MCF 10A (cell line): ENCODE measurements at regions of chr14 and their contacts with region 1.

Region 1: GRCh38 chr14:74493343-74494261 is at the start of gene ISCA2:
- DNase-seq: peak; percentile 99
- H3K4me3 Mint-ChIP-seq: no peak within 1 kb of the TSS
- H3K27ac Mint-ChIP-seq: no peak within 1 kb of the TSS
- H3K4me1 Mint-ChIP-seq: peaks cover 26% of the 10 kb centered on the region
- H3K27me3 Mint-ChIP-seq: no peaks in the 10 kb centered on the region
- CTCF ChIP-seq: no peak
- total RNA-seq, gene ISCA2: 13.9 and 21.1 TPM in 2 replicates

Region 2: GRCh38 chr14:74302634-74303577 is 190.7 kb before region 1 on chr14 and contains the start of gene ABCD4:
- CTCF ChIA-PET with region 1: no interaction called
- POLR2A ChIA-PET with region 1: interaction called, 12 read pairs
- intact Hi-C with region 1: no loop called
- DNase-seq: peak; percentile 93
- H3K4me3 Mint-ChIP-seq: peak within 1 kb of the TSS; percentile 99
- H3K27ac Mint-ChIP-seq: peak within 1 kb of the TSS; percentile 81
- H3K4me1 Mint-ChIP-seq: peaks cover 11% of the 10 kb centered on the region
- H3K27me3 Mint-ChIP-seq: no peaks in the 10 kb centered on the region
- CTCF ChIP-seq: peak; percentile 43
- total RNA-seq, gene ABCD4: 26.6 and 30.8 TPM in 2 replicates

Region 3: GRCh38 chr14:74362361-74362915 is 131.2 kb before region 1 on chr14:
- CTCF ChIA-PET with region 1: interaction called, 9 read pairs
- POLR2A ChIA-PET with region 1: interaction called, 3 read pairs
- intact Hi-C with region 1: loop called (anchors 1 kb)
- DNase-seq: peak; percentile 84
- H3K4me3 Mint-ChIP-seq: no peak overlapping the region
- H3K27ac Mint-ChIP-seq: no peak overlapping the region
- H3K4me1 Mint-ChIP-seq: no peaks in the 10 kb centered on the region
- H3K27me3 Mint-ChIP-seq: peaks cover 23% of the 10 kb centered on the region
- CTCF ChIP-seq: peak; percentile 82

Region 4: DNA sequence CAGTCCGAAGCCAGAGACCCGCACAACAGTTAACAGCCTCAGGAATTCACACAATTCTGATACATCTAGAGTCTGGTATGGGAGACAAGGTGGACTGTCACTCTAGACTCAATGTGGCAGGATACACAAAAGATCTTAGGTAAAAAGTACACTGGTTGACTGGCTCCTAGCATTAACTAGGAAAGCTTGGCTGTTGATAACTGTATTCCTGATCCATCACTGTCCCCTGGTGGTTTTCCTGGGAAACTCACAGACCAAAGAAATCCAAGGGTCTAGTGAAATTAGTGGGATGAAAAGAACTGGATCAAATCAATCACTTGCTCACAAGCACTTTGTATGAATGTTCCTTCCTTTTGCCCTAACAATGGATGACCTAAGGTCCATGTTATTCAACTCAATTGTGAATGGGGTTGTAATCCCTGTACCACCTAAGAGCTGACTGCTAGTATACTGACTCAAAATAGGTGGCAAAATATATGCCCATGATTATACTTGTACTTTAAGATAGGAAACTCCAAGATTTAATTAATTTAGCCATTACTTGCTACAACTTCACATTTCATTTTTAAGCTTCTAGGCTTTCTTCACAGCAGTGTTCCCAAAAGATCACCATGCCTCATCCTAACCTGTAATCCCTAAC is 14.5 kb before region 1 on chr14:
- CTCF ChIA-PET with region 1: interaction called, 13 read pairs
- POLR2A ChIA-PET with region 1: interaction called, 5 read pairs
- intact Hi-C with region 1: no loop called
- DNase-seq: peak; percentile 30
- H3K4me3 Mint-ChIP-seq: no peak overlapping the region
- H3K27ac Mint-ChIP-seq: no peak overlapping the region
- H3K4me1 Mint-ChIP-seq: no peaks in the 10 kb centered on the region
- H3K27me3 Mint-ChIP-seq: no peaks in the 10 kb centered on the region
- CTCF ChIP-seq: peak; percentile 68

Region 5: DNA sequence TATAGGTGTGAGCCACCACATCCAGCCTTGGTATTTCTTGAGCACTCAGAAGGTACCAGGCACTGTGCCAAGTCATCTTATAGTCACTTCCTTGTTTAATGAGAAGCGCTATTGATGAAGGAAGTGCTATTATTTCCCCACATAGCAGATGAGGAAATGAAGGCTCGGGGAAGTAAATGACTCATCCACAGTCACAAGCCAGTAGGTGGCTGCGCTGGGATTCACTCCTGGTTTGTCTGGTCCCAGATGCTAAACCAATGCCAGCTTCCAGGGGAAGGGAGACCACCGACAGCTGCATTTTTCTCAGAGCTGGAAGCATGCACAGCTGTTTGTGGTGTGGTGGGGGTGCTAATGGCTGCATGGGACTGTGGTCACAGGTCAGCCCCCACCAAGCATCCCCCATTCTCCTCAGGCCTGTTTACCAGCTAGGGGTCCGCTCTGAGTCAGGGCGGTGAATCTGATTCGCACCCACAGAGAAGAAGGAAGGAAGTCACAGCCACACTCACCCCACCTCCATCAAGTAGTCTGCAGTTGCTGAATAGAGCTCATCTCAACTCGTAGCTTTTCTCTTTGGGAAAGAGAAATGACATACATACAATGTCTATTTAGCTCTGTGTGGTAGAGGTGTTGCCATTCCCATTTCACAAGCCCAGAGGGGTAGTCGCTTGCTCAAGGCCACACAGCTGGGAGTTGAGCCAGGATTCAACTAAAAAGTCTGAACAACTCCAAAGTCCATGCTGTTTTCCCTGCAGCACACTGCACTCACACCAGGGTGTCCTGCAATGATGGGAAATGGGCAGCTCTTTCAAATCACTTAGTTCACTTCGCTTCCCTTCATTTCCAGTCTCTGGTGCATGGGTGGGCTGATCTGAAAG is 124.7 kb after region 1 on chr14:
- CTCF ChIA-PET with region 1: no interaction called
- POLR2A ChIA-PET with region 1: interaction called, 11 read pairs
- intact Hi-C with region 1: no loop called
- DNase-seq: peak; percentile 92
- H3K4me3 Mint-ChIP-seq: no peak overlapping the region
- H3K27ac Mint-ChIP-seq: peak overlapping the region; percentile 39
- H3K4me1 Mint-ChIP-seq: peaks cover 71% of the 10 kb centered on the region
- H3K27me3 Mint-ChIP-seq: no peaks in the 10 kb centered on the region
- CTCF ChIP-seq: no peak

Region 6: GRCh38 chr14:74737753-74738325 is 244.2 kb after region 1 on chr14:
- CTCF ChIA-PET with region 1: no interaction called
- POLR2A ChIA-PET with region 1: no interaction called
- intact Hi-C with region 1: no loop called
- DNase-seq: peak; percentile 47
- H3K4me3 Mint-ChIP-seq: no peak overlapping the region
- H3K27ac Mint-ChIP-seq: no peak overlapping the region
- H3K4me1 Mint-ChIP-seq: no peaks in the 10 kb centered on the region
- H3K27me3 Mint-ChIP-seq: no peaks in the 10 kb centered on the region
- CTCF ChIP-seq: no peak